Heart left ventricle (tissue), 16 donors: ENCODE measurements at regions of chr6 and their contacts with region 1.

Region 1: DNA sequence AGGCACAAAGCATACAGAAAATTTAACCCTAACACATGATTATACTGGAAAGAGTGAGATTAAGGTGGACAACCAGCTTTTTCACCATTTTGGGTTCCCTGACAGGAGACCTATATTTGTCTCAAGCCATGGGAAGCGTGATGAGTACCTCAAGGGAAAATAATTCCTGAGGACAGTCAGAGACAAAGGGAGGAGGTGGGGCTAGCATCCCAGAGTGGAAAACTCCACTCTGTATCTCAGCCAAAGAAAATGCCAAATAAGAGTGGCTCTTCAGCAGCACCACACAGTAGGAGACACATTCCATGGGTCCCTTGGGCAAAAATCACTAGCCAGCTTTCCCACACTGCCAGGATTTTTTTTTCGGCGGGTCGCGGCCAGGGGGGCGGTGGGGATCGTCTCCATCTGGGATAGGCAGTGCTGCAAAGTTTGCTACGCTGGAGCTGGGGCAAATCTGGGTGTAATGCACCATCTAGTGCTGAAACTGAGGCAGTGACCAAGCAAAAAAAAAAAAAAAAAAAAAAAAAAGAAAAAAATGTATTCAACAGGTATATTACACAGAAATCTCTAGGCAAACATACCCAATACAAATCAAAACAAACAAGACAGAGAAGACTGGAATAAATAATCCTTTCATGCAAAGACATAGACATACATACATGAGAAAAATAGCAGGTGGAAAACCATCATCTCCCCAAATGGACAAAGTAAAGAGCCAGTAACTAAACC is 77.3 kb upstream of the SLC35F1 start:
- DNase-seq: peak in 1 of 5 donors; percentile 32
- ATAC-seq: peak in 2 of 4 donors; percentile 39 to 47
- H3K4me3 ChIP-seq: no peak overlapping the region
- H3K27ac ChIP-seq: no peak overlapping the region
- H3K4me1 ChIP-seq: no peaks in the 10 kb centered on the region
- H3K27me3 ChIP-seq: peaks cover 0 to 3% (median 0%) of the 10 kb centered on the region in 9 donors
- CTCF ChIP-seq: peak in 7 of 12 donors; percentile 7 to 38 (median 28)
- POLR2A ChIP-seq: no peak

Region 2: DNA sequence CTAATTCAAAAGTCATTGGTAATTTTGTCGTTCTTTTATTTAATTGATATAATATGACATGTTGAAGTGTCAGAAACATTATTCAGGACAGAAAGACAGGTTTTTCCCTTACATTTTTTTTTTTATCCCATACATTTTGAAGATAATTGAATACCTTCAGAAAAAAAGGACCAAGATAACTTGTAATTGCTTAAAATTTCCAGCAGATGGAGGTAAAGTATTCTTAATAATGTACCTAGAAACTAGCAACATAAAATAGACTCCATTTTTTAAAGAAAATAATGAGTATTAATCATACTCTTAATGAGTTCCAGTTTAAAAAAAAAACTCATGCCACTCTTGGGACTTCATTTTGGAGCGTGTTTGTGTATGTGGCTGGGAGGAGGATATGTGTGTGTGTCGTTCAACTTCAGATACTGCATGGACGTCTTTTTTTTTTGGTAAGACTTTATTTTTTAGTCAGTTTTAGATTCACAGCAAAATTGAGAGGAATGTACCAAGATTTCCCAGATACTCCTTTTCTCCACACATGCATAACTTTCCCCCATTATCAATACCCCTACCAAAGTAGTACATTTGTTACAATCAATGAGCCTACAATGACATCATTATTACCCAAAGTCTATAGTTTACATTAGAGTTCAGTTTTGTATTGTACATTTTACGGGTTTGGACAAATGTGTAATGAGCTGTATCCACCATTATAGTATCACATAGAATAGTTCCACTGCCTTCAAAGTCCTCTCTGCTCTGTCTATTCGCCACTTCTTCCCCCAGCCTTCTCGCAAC is 483.4 kb before region 1 on chr6:
- intact Hi-C with region 1: loop called in 1 of 10 experiments (anchors 10 kb)
- DNase-seq: no peak
- ATAC-seq: no peak
- H3K4me3 ChIP-seq: peak overlapping the region in 3 of 12 donors; percentile 21 to 31 (median 27)
- H3K27ac ChIP-seq: no peak overlapping the region
- H3K4me1 ChIP-seq: no peaks in the 10 kb centered on the region
- H3K27me3 ChIP-seq: peaks cover 0 to 3% (median 0%) of the 10 kb centered on the region in 9 donors
- CTCF ChIP-seq: peak; percentile 30 to 66 (median 54)
- POLR2A ChIP-seq: no peak

Region 3: DNA sequence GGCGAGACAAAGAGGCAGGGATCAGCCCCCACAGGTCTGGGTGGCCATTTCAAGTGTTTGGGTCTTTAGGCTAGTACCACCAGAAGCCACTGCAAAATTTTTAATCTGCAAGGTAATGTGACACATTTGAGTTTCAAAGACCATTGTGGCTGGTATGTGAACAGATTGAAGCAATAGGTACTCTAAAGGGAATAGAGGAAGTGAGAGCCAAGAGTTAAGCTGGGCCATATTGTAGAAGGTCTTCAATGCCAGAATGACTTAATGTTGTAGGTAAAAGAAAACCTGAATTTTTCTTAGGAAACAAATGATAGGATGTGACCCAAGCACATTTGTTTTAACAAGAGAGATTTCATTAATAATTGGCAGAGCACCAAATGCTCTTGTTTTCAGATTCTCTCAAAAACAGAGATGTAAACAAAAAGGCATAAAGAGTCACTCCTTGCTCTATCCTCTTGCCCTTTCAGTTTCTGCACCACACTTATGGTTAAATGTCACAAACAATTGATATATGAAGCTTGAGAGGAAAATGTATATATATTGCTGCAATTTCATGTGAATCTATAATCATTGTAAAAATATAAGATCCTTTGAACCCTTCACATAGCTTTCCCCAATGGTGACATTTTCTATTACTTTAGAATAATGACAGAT is 411.2 kb after region 1 on chr6:
- intact Hi-C with region 1: no loop called
- DNase-seq: no peak
- ATAC-seq: no peak
- H3K4me3 ChIP-seq: no peak overlapping the region
- H3K27ac ChIP-seq: no peak overlapping the region
- H3K4me1 ChIP-seq: no peaks in the 10 kb centered on the region
- H3K27me3 ChIP-seq: no peaks in the 10 kb centered on the region
- CTCF ChIP-seq: no peak
- POLR2A ChIP-seq: no peak